Activated CD4-positive, alpha-beta T cell treated with anti-CD3 and anti-CD28 coated beads, Interleukin-2, amount 10 ng/mL, durations not matched to agents 24 days and 14 days (primary cell): ENCODE measurements at regions of chr15 and their contacts with region 1.

Region 1: GRCh38 chr15:64387562-64388168 is at the start of gene TRIP4:
- DNase-seq: peak; percentile 99
- H3K4me3 Mint-ChIP-seq: peak within 1 kb of the TSS; percentile 97
- H3K27ac Mint-ChIP-seq: peak within 1 kb of the TSS; percentile 93
- H3K4me1 Mint-ChIP-seq: peaks cover 13% of the 10 kb centered on the region
- H3K27me3 Mint-ChIP-seq: no peaks in the 10 kb centered on the region
- total RNA-seq, gene TRIP4: 21.1 and 23.9 TPM in 2 replicates

Region 2: DNA sequence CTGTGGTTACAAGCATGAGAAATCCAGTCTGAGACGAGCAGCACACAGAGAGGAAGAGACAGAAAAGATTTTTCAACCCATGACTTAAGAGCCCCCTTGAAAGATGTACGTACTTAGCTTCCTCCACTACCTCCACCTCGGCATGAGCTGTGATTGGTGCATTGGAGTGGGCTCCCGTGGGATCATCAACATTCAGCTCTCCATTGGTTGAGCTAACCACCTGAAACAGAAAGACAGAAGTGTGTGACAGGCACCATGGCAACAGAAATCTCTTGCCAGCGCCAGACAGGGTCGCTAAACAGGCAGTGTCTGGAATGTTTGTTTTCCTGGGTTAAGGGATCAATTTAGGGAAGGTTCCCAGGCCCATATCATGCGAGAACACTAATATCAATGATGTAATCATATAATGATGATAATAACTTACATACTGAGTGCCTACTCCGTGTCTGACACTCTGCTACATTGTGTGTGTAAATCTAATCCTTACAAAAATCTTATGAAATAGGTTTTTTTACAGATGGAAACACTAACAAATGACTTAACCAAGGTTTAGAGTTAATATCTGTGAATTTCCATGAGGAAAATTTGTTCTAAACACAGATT is 207.3 kb before region 1 on chr15:
- intact Hi-C with region 1: no loop called
- DNase-seq: no peak
- H3K4me3 Mint-ChIP-seq: no peak overlapping the region
- H3K27ac Mint-ChIP-seq: no peak overlapping the region
- H3K4me1 Mint-ChIP-seq: no peaks in the 10 kb centered on the region
- H3K27me3 Mint-ChIP-seq: no peaks in the 10 kb centered on the region

Region 3: DNA sequence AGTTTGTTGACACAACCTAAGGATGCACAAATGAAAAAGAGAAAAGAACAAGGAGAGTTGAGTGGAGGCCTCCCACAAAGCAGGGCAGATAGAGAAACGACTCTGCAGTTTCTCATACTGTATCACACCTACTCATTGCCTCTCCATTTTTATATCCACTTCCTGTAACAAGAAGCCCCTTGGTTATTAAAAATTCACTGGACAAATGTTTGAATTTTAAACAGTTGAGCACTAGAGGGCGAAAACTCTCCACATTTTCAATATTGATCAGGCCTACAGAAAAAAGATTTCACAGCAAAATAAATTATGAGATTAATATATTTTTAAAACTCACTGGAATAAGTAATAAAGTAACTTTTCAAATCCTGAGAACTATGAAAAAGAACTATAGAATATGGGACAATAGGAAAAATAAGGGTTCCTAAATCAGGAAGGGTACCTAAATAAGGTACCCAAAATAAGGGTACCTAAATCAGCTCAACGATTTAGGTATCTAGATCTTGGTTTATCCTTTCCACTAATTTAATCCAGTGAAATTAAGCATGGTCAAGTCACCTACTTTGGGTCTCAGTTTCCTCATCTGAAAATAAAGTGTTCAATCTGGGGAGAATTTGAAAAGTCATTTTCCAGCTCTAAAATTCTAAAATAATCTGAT is 177.9 kb before region 1 on chr15:
- intact Hi-C with region 1: loop called (anchors 10 kb)
- DNase-seq: peak; percentile 60
- H3K4me3 Mint-ChIP-seq: no peak overlapping the region
- H3K27ac Mint-ChIP-seq: no peak overlapping the region
- H3K4me1 Mint-ChIP-seq: no peaks in the 10 kb centered on the region
- H3K27me3 Mint-ChIP-seq: no peaks in the 10 kb centered on the region

Region 4: DNA sequence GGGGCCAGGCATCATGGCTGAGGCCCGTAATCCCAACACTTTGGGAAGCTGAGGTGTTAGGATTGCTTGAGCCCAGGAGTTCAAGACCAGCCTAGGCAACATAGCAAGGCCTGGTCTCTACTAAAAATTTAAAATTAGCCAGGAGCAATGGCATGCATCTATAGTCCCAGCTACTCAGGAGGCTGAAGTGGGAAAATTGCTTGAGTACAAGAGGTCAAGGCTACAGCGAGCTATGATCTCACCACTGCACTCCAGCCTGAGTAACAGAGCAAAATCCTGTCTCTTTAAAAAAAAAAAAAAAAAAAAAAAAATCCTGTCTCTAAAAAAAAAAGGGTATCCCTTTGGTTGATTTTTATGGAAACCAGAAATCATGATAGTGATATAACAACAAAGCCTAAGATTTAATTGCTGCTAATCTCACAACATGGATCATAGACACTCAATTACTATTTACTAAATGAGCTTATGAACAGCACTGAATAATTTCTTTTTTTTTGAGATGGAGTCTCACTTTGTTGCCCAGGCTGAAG is 18.5 kb before region 1 on chr15:
- intact Hi-C with region 1: no loop called
- DNase-seq: no peak
- H3K4me3 Mint-ChIP-seq: no peak overlapping the region
- H3K27ac Mint-ChIP-seq: no peak overlapping the region
- H3K4me1 Mint-ChIP-seq: peaks cover 3% of the 10 kb centered on the region
- H3K27me3 Mint-ChIP-seq: no peaks in the 10 kb centered on the region

Region 5: GRCh38 chr15:64642875-64643274 is 255.2 kb after region 1 on chr15:
- intact Hi-C with region 1: no loop called
- DNase-seq: no peak
- H3K4me3 Mint-ChIP-seq: no peak overlapping the region
- H3K27ac Mint-ChIP-seq: no peak overlapping the region
- H3K4me1 Mint-ChIP-seq: peaks cover 30% of the 10 kb centered on the region
- H3K27me3 Mint-ChIP-seq: no peaks in the 10 kb centered on the region